ENCODE measurements at regions of chr19 and their contacts with region 1.

Region 1: GRCh38 chr19:3762501-3763459 is at the start of gene MRPL54:
- DNase-seq: peak; percentile 100
- ATAC-seq: peak; percentile 88
- H3K4me3 Mint-ChIP-seq: peak within 1 kb of the TSS; percentile 100
- H3K27ac Mint-ChIP-seq: peak within 1 kb of the TSS; percentile 99
- H3K4me1 Mint-ChIP-seq: peaks cover 39% of the 10 kb centered on the region
- H3K27me3 Mint-ChIP-seq: no peaks in the 10 kb centered on the region
- total RNA-seq, gene MRPL54: 54.8 to 63.9 TPM

Region 2: DNA sequence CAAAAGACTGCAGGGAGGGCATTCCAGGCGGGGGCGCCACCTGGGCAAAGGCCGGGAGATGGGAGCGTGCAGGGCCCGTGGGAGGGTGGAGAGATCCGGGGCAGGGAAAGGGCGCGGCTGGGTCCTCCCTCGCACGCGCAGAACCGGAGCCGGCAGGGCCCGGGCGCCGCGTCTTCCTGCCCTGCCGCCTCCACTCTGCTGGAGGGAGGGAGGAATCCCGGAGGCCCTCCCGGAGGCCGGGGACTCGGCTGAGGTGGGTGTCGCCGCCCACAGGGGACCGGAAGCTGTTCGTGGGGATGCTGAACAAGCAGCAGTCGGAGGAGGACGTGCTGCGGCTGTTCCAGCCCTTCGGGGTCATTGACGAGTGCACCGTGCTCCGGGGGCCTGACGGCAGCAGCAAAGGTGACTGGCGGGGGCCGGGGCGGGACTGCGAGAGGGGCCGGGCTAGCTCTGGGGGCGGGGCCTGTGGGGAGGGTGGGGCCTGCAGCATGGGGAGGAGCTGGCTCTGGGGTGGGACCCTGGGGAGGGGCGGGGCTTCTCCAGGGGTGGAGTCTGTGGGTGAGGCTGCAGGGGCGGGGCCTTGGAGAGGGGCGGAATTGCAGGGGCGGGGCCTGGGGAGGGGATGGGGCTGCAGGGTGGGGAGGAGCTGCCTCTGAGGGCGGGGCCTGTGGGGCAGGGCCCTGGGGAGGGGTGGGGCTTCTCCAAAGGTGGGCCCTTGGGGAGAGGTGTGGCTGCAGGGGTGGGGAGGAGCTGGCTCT is 487.0 kb before region 1 on chr19:
- CTCF ChIA-PET with region 1: no interaction called
- POLR2A ChIA-PET with region 1: no interaction called
- intact Hi-C with region 1: loop called in 1 of 2 experiments (anchors 2 kb)
- DNase-seq: peak; percentile 99
- ATAC-seq: peak; percentile 83
- H3K4me3 Mint-ChIP-seq: peak overlapping the region; percentile 73
- H3K27ac Mint-ChIP-seq: peak overlapping the region; percentile 80
- H3K4me1 Mint-ChIP-seq: peaks cover 8% of the 10 kb centered on the region
- H3K27me3 Mint-ChIP-seq: peaks cover 9% of the 10 kb centered on the region

Region 3: GRCh38 chr19:3505598-3506383 is 257.0 kb before region 1 on chr19 and contains the start of gene FZR1:
- CTCF ChIA-PET with region 1: no interaction called
- POLR2A ChIA-PET with region 1: no interaction called
- intact Hi-C with region 1: loop called (anchors 1 to 2 kb)
- DNase-seq: peak; percentile 100
- ATAC-seq: peak; percentile 92
- H3K4me3 Mint-ChIP-seq: peak within 1 kb of the TSS; percentile 84
- H3K27ac Mint-ChIP-seq: peak within 1 kb of the TSS; percentile 86
- H3K4me1 Mint-ChIP-seq: peaks cover 45% of the 10 kb centered on the region
- H3K27me3 Mint-ChIP-seq: no peaks in the 10 kb centered on the region
- total RNA-seq, gene FZR1: 40.8 to 50.7 TPM

Region 4: DNA sequence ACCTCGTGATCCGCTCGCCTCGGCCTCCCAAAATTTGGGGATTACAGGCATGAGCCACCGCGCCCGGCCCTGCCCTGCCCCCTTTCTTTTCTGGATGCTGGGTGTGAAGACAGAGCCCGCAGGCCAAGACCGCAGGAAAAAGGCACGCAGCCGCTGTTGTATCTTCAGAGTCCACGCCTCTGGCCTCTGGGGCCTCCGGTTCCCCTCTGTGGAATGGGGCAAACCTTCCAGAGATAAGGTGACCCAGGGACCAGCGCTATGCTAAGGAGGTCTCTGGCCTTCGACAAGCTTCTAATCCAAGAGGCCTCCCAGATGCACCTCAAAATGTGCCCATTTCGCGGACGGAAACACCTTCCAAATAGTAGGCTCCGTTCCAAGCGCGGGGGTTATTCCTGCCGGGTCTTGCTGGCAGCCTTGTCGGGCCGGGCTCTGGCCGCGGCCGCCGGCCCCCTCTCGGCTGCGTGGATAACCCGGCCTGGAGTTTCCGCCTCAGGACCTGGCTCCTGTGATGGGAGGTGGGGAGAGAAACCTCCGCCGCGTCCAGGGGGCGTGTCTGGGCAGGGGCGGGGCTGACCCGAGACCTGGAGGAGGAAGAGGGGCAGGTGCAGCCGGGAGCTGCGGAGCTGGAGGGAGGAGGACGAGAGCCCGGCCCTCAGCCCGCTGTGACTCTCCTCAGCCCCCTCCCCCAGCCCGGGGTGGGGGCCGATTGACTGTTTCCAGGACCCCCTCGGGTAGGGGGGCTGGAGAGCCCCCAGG is 41.5 kb before region 1 on chr19:
- CTCF ChIA-PET with region 1: no interaction called
- POLR2A ChIA-PET with region 1: no interaction called
- intact Hi-C with region 1: loop called in 1 of 2 experiments (anchors 2 kb)
- DNase-seq: peak; percentile 92
- ATAC-seq: peak; percentile 94
- H3K4me3 Mint-ChIP-seq: peak overlapping the region; percentile 13
- H3K27ac Mint-ChIP-seq: no peak overlapping the region
- H3K4me1 Mint-ChIP-seq: peaks cover 10% of the 10 kb centered on the region
- H3K27me3 Mint-ChIP-seq: peaks cover 4% of the 10 kb centered on the region

Region 5: GRCh38 chr19:3821857-3822364 is 59.1 kb after region 1 on chr19:
- CTCF ChIA-PET with region 1: interaction called, 28 read pairs
- POLR2A ChIA-PET with region 1: interaction called, 8 read pairs
- intact Hi-C with region 1: loop called (anchors 1 to 2 kb)
- DNase-seq: peak; percentile 94
- ATAC-seq: peak; percentile 78
- H3K4me3 Mint-ChIP-seq: no peak overlapping the region
- H3K27ac Mint-ChIP-seq: no peak overlapping the region
- H3K4me1 Mint-ChIP-seq: peaks cover 23% of the 10 kb centered on the region
- H3K27me3 Mint-ChIP-seq: no peaks in the 10 kb centered on the region

Region 6: DNA sequence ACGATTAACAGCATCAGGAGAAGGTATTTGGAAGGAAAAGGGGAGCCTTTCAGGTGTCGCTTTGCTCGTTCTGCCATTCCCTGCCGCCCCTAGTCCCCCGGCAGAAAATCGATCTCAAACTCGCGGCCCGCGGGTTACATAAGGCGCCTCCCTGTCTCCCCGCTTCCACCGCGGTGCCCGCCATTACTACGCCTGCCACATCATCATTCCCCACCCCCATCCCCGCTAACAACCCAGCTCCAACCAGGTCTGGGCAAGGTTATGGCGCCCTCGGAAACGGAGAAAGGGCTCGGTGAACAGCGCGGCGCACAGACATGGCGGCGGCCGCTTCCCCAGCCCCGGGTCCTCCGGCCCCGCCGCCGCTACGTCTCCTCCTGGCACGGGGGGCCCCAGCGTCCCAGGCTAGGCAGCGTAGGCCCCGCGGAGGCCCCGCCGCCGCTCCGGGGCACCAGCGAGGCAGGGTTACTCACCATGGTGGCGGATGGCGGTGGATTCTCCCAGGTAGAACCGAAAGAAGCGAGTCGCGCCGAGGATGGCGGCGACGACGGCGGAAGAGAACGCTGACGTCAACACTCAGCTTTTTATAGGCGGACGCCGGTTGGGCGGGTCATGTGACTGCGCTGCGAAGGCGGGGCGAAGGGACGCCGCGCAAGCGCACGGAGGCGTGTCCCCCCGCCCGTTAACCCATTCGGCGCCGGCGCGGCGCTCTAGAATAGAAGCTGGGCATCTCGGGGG is 222.3 kb after region 1 on chr19 and contains the start of gene EEF2:
- CTCF ChIA-PET with region 1: interaction called, 5 read pairs
- POLR2A ChIA-PET with region 1: no interaction called
- intact Hi-C with region 1: loop called in 1 of 2 experiments (anchors 1 kb)
- DNase-seq: peak; percentile 94
- ATAC-seq: peak; percentile 45
- H3K4me3 Mint-ChIP-seq: peak within 1 kb of the TSS; percentile 87
- H3K27ac Mint-ChIP-seq: peak within 1 kb of the TSS; percentile 94
- H3K4me1 Mint-ChIP-seq: peaks cover 52% of the 10 kb centered on the region
- H3K27me3 Mint-ChIP-seq: no peaks in the 10 kb centered on the region
- total RNA-seq, gene EEF2: 3,116 to 3,255 TPM

Region 7: GRCh38 chr19:4182084-4182810 is 419.5 kb after region 1 on chr19 and contains the starts of genes ANKRD24 and SIRT6:
- CTCF ChIA-PET with region 1: no interaction called
- POLR2A ChIA-PET with region 1: no interaction called
- intact Hi-C with region 1: loop called in 1 of 2 experiments (anchors 1 kb)
- DNase-seq: peak; percentile 98
- ATAC-seq: peak; percentile 84
- H3K4me3 Mint-ChIP-seq: peak within 1 kb of the TSS; percentile 92
- H3K27ac Mint-ChIP-seq: peak within 1 kb of the TSS; percentile 93
- H3K4me1 Mint-ChIP-seq: peaks cover 30% of the 10 kb centered on the region
- H3K27me3 Mint-ChIP-seq: no peaks in the 10 kb centered on the region
- total RNA-seq, gene ANKRD24: 1.1 to 1.3 TPM
- total RNA-seq, gene SIRT6: 26.2 to 29.4 TPM

Measured in activated CD4-positive, alpha-beta T cell treated with anti-CD3 and anti-CD28 coated beads for 36 hours (primary cell).